ENCODE measurements at regions of chr17 and their contacts with region 1.

Region 1: DNA sequence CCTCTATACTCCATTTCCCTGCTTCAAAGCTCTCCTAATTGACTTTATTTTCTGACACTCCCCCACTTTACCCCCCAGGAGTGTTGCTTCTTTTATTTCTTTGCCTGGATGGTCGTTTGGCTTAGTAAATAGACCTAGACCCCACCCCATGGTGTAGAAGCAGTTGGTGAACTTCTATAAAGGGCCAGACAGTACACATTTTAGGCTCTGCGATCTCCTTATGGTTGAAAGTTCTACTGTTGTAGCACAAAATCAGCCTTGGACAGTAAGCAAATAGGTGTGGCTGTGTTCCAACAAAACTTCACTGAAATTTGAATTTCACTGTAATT is 31.9 kb downstream of the ZNF287 start:
- DNase-seq: no peak
- H3K4me3 ChIP-seq: peak overlapping the region in 38 of 59 donors; percentile 64 to 96 (median 82)
- H3K27ac ChIP-seq: peak overlapping the region in 18 of 59 donors; percentile 0 to 98 (median 92)
- H3K27me3 ChIP-seq: no peaks in the 10 kb centered on the region
- CTCF ChIP-seq: peak in 3 of 56 donors; percentile 1 to 6 (median 2)

Region 2: DNA sequence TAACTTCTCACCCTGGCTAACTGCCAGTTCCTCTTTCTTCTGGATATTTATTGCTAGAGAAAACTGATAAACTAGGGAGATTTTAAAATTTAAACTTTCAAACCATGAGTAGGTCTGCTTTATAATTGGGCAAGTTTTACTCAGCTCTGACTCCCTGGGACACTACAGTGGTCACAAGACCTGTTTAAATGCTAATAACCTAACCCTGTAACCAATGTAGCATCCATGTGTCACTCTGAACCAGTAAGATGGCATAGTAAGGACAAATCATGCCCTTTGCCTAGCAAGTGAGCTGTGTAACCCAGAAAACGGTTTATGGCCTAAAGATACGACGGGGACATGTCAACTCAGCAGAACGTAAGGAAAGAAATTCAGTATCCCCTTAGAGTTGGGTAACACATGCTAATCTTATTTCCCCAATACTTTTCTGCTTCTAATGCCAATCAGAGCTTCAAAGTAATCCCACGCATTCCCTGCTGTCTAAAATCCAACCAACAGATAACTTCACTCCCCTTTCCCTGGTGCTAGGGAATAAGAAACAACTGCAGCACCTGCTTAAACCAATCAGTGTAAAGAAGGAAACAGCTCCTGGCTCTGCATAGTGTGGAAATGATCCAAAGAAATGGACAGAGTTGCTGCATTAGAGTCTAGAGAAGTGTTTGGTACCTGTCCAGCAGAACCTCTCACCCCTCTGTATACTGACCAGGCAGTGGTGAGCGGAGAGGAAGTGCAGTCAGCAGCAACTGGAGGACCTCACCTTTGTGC is 407.5 kb before region 1 on chr17:
- intact Hi-C with region 1: no loop called
- DNase-seq: no peak
- H3K4me3 ChIP-seq: no peak overlapping the region
- H3K27ac ChIP-seq: peak overlapping the region in 5 of 59 donors; percentile 8 to 22 (median 10)
- H3K27me3 ChIP-seq: no peaks in the 10 kb centered on the region
- CTCF ChIP-seq: no peak

Region 3: DNA sequence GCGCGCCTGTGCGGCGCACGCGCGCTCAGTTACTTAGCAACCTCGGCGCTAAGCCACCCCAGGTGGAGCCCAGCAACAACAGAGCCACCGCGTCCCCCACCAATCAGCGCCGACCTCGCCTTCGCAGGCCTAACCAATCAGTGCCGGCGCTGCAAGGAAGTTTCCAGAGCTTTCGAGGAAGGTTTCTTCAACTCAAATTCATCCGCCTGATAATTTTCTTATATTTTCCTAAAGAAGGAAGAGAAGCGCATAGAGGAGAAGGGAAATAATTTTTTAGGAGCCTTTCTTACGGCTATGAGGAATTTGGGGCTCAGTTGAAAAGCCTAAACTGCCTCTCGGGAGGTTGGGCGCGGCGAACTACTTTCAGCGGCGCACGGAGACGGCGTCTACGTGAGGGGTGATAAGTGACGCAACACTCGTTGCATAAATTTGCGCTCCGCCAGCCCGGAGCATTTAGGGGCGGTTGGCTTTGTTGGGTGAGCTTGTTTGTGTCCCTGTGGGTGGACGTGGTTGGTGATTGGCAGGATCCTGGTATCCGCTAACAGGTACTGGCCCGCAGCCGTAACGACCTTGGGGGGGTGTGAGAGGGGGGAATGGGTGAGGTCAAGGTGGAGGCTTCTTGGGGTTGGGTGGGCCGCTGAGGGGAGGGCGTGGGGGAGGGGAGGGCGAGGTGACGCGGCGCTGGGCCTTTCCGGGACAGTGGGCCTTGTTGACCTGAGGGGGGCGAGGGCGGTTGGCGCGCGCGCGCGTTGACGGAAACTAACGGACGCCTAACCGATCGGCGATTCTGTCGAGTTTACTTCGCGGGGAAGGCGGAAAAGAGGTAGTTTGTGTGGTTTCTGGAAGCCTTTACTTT is 156.2 kb before region 1 on chr17 and contains the start of gene UBB:
- intact Hi-C with region 1: loop called in 1 of 2 experiments (anchors 5 kb)
- DNase-seq: peak; percentile 90 to 97 (median 96)
- H3K4me3 ChIP-seq: peak within 1 kb of the TSS; percentile 64 to 93 (median 80)
- H3K27ac ChIP-seq: peak within 1 kb of the TSS; percentile 84 to 100 (median 99)
- H3K27me3 ChIP-seq: no peaks in the 10 kb centered on the region
- CTCF ChIP-seq: peak in 9 of 56 donors; percentile 4 to 45 (median 9)
- total RNA-seq, gene UBB: 963 to 2,431 (median 1,830) TPM

Region 4: GRCh38 chr17:16491703-16492612 is 45.1 kb before region 1 on chr17 and contains the start of gene LRRC75A:
- intact Hi-C with region 1: loop called in 1 of 2 experiments (anchors 5 kb)
- DNase-seq: peak in 2 of 10 donors; percentile 40 to 67
- H3K4me3 ChIP-seq: peak within 1 kb of the TSS; percentile 43 to 78 (median 64)
- H3K27ac ChIP-seq: peak within 1 kb of the TSS in 19 of 59 donors; percentile 19 to 78 (median 48)
- H3K27me3 ChIP-seq: no peaks in the 10 kb centered on the region
- CTCF ChIP-seq: peak in 10 of 56 donors; percentile 11 to 27 (median 20)
- total RNA-seq, gene LRRC75A: 5.5 to 19.8 (median 11.0) TPM

Region 5: GRCh38 chr17:16568541-16569357 is 31.7 kb after region 1 on chr17 and contains the start of gene ZNF287:
- intact Hi-C with region 1: loop called (anchors 1 to 2 kb)
- DNase-seq: peak; percentile 94 to 98 (median 96)
- H3K4me3 ChIP-seq: peak within 1 kb of the TSS; percentile 60 to 100 (median 91)
- H3K27ac ChIP-seq: peak within 1 kb of the TSS in 57 of 59 donors; percentile 23 to 93 (median 84)
- H3K27me3 ChIP-seq: no peaks in the 10 kb centered on the region
- CTCF ChIP-seq: peak in 36 of 56 donors; percentile 8 to 61 (median 30)
- total RNA-seq, gene ZNF287: 9.2 to 29.9 (median 15.2) TPM

Region 6: DNA sequence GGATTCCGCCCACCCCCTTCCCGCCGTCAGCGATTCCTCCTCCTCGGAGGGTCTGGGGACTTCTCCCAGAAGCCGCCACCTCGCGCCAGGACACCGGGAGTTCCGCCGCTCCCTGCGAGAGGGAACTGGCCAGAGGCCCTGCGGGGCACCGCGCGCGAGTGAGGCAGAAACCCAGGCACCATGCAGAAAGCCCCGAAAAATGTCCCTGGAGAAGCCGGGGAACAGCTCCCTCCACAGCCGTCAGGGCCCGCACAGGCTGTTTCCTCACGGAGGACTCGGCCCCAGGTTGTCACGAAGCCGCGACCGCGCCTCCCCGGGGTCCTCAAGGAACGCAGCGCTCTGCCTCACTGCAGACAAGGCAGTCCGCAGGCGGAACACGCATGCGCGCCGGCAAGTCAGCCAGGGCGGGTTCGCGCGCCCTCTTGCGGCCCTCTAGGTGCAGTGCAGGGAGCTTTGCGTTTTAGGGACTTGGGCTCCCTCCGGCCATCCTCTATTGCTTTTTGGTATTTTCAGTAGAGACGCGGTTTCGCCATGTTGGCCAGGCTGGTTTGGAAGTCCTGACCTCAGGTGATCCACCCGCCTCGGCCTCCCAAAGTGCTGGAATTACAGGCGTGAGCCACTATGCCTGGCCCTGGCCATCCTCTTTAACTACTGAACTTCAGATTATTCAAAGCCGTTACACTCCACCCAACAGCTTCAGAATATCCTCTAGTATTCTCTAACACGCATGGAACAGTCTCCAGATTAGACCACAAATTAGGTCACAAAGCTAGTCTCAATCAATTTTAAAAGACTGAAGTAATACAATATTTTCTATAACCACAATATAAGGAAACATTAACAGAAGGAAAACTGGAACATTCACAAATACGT is 52.2 kb after region 1 on chr17:
- intact Hi-C with region 1: loop called (anchors 1 to 5 kb)
- DNase-seq: peak; percentile 89 to 94 (median 90)
- H3K4me3 ChIP-seq: peak overlapping the region; percentile 53 to 98 (median 76)
- H3K27ac ChIP-seq: peak overlapping the region in 58 of 59 donors; percentile 13 to 95 (median 82)
- H3K27me3 ChIP-seq: no peaks in the 10 kb centered on the region
- CTCF ChIP-seq: peak; percentile 96 to 100 (median 99)

Region 7: GRCh38 chr17:16820161-16820877 is 283.2 kb after region 1 on chr17:
- intact Hi-C with region 1: no loop called
- DNase-seq: peak in 1 of 10 donors; percentile 25
- H3K4me3 ChIP-seq: no peak overlapping the region
- H3K27ac ChIP-seq: peak overlapping the region in 3 of 59 donors; percentile 3 to 22 (median 11)
- H3K27me3 ChIP-seq: peaks cover 0 to 3% (median 0%) of the 10 kb centered on the region in 45 donors
- CTCF ChIP-seq: no peak

Measured in dorsolateral prefrontal cortex (tissue), 120 donors.